CD8-positive, alpha-beta memory T cell (primary cell): ENCODE measurements at regions of chr3 and their contacts with region 1.

Region 1: GRCh38 chr3:111978493-111979433 is at the start of gene ABHD10:
- DNase-seq: peak; percentile 92 to 99 (median 95)
- H3K4me3 ChIP-seq: peak within 1 kb of the TSS; percentile 97
- H3K4me3 Mint-ChIP-seq: peak within 1 kb of the TSS; percentile 90 to 98 (median 93)
- H3K27ac ChIP-seq: peak within 1 kb of the TSS; percentile 87
- H3K27ac Mint-ChIP-seq: peak within 1 kb of the TSS; percentile 88 to 96 (median 92)
- H3K4me1 ChIP-seq: peaks cover 31% of the 10 kb centered on the region
- H3K4me1 Mint-ChIP-seq: peaks cover 41 to 51% (median 46%) of the 10 kb centered on the region in 3 donors
- H3K27me3 ChIP-seq: no peaks in the 10 kb centered on the region
- H3K27me3 Mint-ChIP-seq: peaks cover 0 to 2% of the 10 kb centered on the region in 2 donors
- total RNA-seq, gene ABHD10: 43.1 to 44.1 TPM

Region 2: GRCh38 chr3:111859974-111860859 is 118.5 kb before region 1 on chr3:
- CTCF ChIA-PET with region 1: interaction called, 10 read pairs
- POLR2A ChIA-PET with region 1: interaction called, 11 read pairs
- DNase-seq: peak; percentile 45 to 78 (median 50)
- H3K4me3 ChIP-seq: peak overlapping the region; percentile 78
- H3K4me3 Mint-ChIP-seq: peak overlapping the region; percentile 94 to 99 (median 97)
- H3K27ac ChIP-seq: peak overlapping the region; percentile 61
- H3K27ac Mint-ChIP-seq: peak overlapping the region; percentile 87 to 96 (median 94)
- H3K4me1 ChIP-seq: peaks cover 6% of the 10 kb centered on the region
- H3K4me1 Mint-ChIP-seq: peaks cover 32 to 42% (median 41%) of the 10 kb centered on the region in 3 donors
- H3K27me3 ChIP-seq: peaks cover 5% of the 10 kb centered on the region
- H3K27me3 Mint-ChIP-seq: peaks cover 0 to 2% of the 10 kb centered on the region in 2 donors

Region 3: GRCh38 chr3:111904376-111905241 is 74.2 kb before region 1 on chr3:
- CTCF ChIA-PET with region 1: no interaction called
- POLR2A ChIA-PET with region 1: no interaction called
- DNase-seq: no peak
- H3K4me3 ChIP-seq: no peak overlapping the region
- H3K4me3 Mint-ChIP-seq: peak overlapping the region in 1 of 7 donors; percentile 24
- H3K27ac ChIP-seq: no peak overlapping the region
- H3K27ac Mint-ChIP-seq: peak overlapping the region in 2 of 8 donors; percentile 25 to 62
- H3K4me1 ChIP-seq: no peaks in the 10 kb centered on the region
- H3K4me1 Mint-ChIP-seq: peaks cover 0 to 11% (median 0%) of the 10 kb centered on the region in 3 donors
- H3K27me3 ChIP-seq: no peaks in the 10 kb centered on the region
- H3K27me3 Mint-ChIP-seq: peaks cover 0 to 3% of the 10 kb centered on the region in 2 donors

Region 4: GRCh38 chr3:111967651-111968274 is 11.0 kb before region 1 on chr3:
- CTCF ChIA-PET with region 1: interaction called, 28 read pairs
- POLR2A ChIA-PET with region 1: interaction called, 5 read pairs
- DNase-seq: peak; percentile 61 to 84 (median 67)
- H3K4me3 ChIP-seq: no peak overlapping the region
- H3K4me3 Mint-ChIP-seq: no peak overlapping the region
- H3K27ac ChIP-seq: no peak overlapping the region
- H3K27ac Mint-ChIP-seq: peak overlapping the region in 3 of 8 donors; percentile 7 to 8 (median 7)
- H3K4me1 ChIP-seq: peaks cover 3% of the 10 kb centered on the region
- H3K4me1 Mint-ChIP-seq: peaks cover 3 to 9% (median 4%) of the 10 kb centered on the region in 3 donors
- H3K27me3 ChIP-seq: no peaks in the 10 kb centered on the region
- H3K27me3 Mint-ChIP-seq: no peaks in the 10 kb centered on the region

Region 5: GRCh38 chr3:111989061-111989678 is 10.4 kb after region 1 on chr3:
- CTCF ChIA-PET with region 1: interaction called, 19 read pairs
- POLR2A ChIA-PET with region 1: interaction called, 13 read pairs
- DNase-seq: peak in 1 of 5 donors; percentile 14
- H3K4me3 ChIP-seq: no peak overlapping the region
- H3K4me3 Mint-ChIP-seq: no peak overlapping the region
- H3K27ac ChIP-seq: no peak overlapping the region
- H3K27ac Mint-ChIP-seq: peak overlapping the region in 1 of 8 donors; percentile 44
- H3K4me1 ChIP-seq: peaks cover 2% of the 10 kb centered on the region
- H3K4me1 Mint-ChIP-seq: peaks cover 27 to 42% (median 42%) of the 10 kb centered on the region in 3 donors
- H3K27me3 ChIP-seq: no peaks in the 10 kb centered on the region
- H3K27me3 Mint-ChIP-seq: no peaks in the 10 kb centered on the region

Region 6: DNA sequence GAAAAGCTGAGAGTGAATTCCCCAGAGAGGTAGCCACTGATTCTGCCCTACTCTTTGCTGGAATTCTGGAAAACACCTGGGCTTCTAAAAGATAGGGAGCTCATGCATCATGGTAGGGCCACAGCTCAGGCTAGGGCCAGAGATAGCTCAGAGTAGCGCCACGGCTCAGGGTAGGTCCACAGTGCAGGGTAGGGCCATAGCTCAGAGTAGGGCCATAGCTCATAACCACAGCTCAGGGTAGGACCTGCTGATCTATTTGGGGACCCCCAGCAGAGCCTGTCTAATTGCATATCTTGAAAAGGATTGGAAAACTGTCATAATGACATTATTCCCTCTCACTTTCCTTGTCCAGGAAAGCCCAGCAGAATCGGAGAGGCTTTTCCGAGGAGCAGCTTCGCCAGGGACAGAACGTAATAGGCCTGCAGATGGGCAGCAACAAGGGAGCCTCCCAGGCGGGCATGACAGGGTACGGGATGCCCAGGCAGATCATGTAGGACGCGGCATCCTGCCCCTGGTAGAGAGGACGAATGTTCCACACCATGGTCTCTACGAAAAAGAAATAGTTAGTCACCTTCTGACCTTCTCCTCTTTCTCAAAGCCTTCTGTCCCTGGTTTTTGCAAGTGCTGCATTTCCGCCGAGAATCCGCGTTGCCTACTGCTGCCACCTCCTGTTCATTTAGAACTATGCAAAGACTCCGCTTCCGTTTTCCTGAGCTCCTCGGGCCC is 34.5 kb after region 1 on chr3:
- CTCF ChIA-PET with region 1: interaction called, 20 read pairs
- POLR2A ChIA-PET with region 1: no interaction called
- DNase-seq: peak; percentile 15 to 57 (median 41)
- H3K4me3 ChIP-seq: no peak overlapping the region
- H3K4me3 Mint-ChIP-seq: peak overlapping the region in 4 of 7 donors; percentile 21 to 67 (median 36)
- H3K27ac ChIP-seq: no peak overlapping the region
- H3K27ac Mint-ChIP-seq: peak overlapping the region in 2 of 8 donors; percentile 20 to 76
- H3K4me1 ChIP-seq: peaks cover 5% of the 10 kb centered on the region
- H3K4me1 Mint-ChIP-seq: peaks cover 5 to 19% (median 11%) of the 10 kb centered on the region in 3 donors
- H3K27me3 ChIP-seq: no peaks in the 10 kb centered on the region
- H3K27me3 Mint-ChIP-seq: peaks cover 0 to 1% of the 10 kb centered on the region in 2 donors

Region 7: DNA sequence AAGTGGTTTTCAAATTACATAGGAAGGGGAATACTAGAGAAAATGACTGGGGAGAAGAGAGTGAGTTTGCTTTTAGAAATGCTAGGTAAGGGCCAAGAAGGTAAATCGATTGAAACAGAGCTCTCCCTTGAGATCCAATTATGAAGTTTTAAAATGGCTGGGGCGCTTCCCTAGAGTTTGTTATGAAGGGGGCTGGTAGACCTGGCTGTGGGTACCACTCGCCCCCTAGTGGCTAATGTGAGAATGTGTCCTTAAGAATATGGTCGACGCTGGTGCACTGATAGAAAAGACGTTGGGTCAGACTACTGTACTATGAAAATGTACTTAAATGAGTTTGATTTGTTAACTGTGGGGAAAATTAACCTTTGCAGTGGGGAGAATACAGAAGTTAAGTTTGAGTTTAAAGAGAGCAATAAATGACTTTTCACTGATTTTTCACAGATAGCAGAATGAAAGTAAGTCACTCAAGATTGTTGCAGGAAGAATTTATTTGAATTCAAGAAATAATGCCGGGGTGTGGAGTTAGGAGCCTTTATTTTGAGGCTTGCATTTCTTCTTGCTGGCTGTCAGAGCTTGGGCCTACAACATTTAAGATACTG is 64.9 kb after region 1 on chr3:
- CTCF ChIA-PET with region 1: no interaction called
- POLR2A ChIA-PET with region 1: no interaction called
- DNase-seq: peak; percentile 3 to 66 (median 54)
- H3K4me3 ChIP-seq: no peak overlapping the region
- H3K4me3 Mint-ChIP-seq: no peak overlapping the region
- H3K27ac ChIP-seq: no peak overlapping the region
- H3K27ac Mint-ChIP-seq: no peak overlapping the region
- H3K4me1 ChIP-seq: peaks cover 4% of the 10 kb centered on the region
- H3K4me1 Mint-ChIP-seq: peaks cover 0 to 3% (median 0%) of the 10 kb centered on the region in 3 donors
- H3K27me3 ChIP-seq: no peaks in the 10 kb centered on the region
- H3K27me3 Mint-ChIP-seq: peaks cover 2 to 7% of the 10 kb centered on the region in 2 donors

Region 8: GRCh38 chr3:112097378-112097777 is 118.6 kb after region 1 on chr3:
- CTCF ChIA-PET with region 1: no interaction called
- POLR2A ChIA-PET with region 1: no interaction called
- DNase-seq: no peak
- H3K4me3 ChIP-seq: no peak overlapping the region
- H3K4me3 Mint-ChIP-seq: no peak overlapping the region
- H3K27ac ChIP-seq: no peak overlapping the region
- H3K27ac Mint-ChIP-seq: no peak overlapping the region
- H3K4me1 ChIP-seq: peaks cover 3% of the 10 kb centered on the region
- H3K4me1 Mint-ChIP-seq: peaks cover 1 to 12% (median 7%) of the 10 kb centered on the region in 3 donors
- H3K27me3 ChIP-seq: no peaks in the 10 kb centered on the region
- H3K27me3 Mint-ChIP-seq: peaks cover 6 to 22% of the 10 kb centered on the region in 2 donors